ENCODE measurements at regions of chr1 and their contacts with region 1.

Region 1: DNA sequence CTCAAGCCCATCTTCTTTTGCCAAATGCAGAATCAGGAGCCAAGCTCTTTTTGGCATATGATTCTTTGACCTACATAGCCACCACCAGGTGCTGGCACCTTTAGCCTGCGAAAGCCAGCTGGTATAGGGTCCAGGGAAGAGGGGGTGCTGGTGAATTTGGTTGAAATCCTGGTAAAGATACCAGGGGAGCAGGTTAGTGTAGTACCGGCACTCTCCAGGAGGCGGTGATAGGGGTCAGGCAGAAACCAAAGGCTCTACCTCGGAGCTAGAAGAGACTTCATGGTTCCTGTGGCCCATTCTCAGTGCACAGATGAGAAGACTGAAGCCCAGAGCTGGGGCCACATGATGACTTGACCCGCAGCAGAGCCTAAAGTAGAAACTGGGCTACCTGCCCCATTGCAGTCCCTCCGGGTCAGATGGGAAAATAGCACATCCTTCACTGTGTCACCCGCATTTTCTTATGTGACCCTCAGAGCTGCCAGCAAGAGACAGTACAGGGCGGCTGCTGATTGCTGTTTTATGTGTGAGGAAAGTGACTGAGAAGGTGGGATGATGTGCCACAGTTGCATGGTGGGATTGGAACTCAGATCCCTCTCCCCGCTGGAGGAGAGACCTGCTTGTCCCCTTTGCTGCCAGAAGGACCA is 36.0 kb upstream of the IL19 start:
- DNase-seq: peak; percentile 43 to 78
- ATAC-seq: peak; percentile 60 to 84; a peak in 4 of 6 replicates
- H3K4me3 ChIP-seq: no peak overlapping the region
- H3K27ac ChIP-seq: no peak overlapping the region
- H3K4me1 ChIP-seq: peaks cover 6% of the 10 kb centered on the region; the same call in 1 of the 3 replicates
- CTCF ChIP-seq: peak; percentile 65
- EP300 ChIP-seq: no peak
- POLR2A ChIP-seq: no peak
- RAD21 ChIP-seq: peak; percentile 73 to 75

Region 2: GRCh38 chr1:206496131-206496793 is 238.4 kb before region 1 on chr1:
- CTCF ChIA-PET with region 1: no interaction called
- POLR2A ChIA-PET with region 1: no interaction called
- DNase-seq: no peak
- ATAC-seq: no peak
- H3K4me3 ChIP-seq: no peak overlapping the region
- H3K27ac ChIP-seq: no peak overlapping the region
- H3K4me1 ChIP-seq: peaks cover 11% of the 10 kb centered on the region; the same call in 2 of the 3 replicates
- CTCF ChIP-seq: no peak
- EP300 ChIP-seq: no peak
- POLR2A ChIP-seq: no peak
- RAD21 ChIP-seq: no peak

Region 3: DNA sequence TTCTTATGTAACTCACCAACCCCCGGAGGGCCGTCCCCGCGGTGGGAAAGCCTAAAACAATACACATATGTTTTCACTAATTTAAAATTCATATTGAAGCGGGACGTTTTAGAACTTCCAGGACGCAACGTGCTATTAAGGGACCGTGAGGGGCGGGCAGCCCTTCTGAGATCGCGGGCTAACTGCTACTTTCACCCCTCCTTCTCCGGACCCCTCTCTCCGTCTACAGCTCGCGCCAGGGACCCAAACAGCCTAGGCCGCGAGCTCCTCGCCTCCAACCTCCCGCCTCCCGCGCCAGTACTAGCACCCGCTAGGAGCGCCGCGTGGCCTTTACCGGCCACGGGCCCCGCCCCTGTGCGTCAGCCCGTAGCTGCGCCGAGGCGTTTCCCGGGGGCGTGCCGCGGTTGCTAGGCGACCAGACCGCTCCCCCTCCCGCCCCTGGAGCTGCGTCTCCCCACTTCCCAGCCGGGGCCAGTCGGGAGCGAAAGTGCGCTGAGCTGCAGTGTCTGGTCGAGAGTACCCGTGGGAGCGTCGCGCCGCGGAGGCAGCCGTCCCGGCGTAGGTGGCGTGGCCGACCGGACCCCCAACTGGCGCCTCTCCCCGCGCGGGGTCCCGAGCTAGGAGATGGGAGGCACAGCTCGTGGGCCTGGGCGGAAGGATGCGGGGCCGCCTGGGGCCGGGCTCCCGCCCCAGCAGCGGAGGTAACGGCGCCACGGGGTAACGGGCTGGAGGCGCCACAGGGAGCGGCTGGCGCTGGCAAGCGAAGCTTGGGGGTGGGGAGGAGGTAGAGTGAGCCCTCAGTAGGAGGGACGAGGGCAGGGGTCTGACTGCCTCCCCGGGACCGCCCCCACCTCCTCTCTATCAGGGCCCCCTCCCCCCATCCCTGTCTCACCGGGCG is 99.3 kb before region 1 on chr1 and contains the start of gene DYRK3:
- CTCF ChIA-PET with region 1: interaction called, 14 read pairs
- POLR2A ChIA-PET with region 1: no interaction called
- DNase-seq: peak; percentile 87 to 93
- ATAC-seq: peak; percentile 91 to 95
- H3K4me3 ChIP-seq: peak within 1 kb of the TSS; percentile 91
- H3K27ac ChIP-seq: peak within 1 kb of the TSS; percentile 88 to 89
- H3K4me1 ChIP-seq: peaks cover 32% of the 10 kb centered on the region; the same call in 2 of the 3 replicates
- CTCF ChIP-seq: no peak
- EP300 ChIP-seq: no peak
- POLR2A ChIP-seq: peak; percentile 91
- RAD21 ChIP-seq: no peak; a peak in 1 of 5 replicates
- polyA plus RNA-seq, gene DYRK3: 7.3 and 9.3 TPM in 2 replicates

Region 4: DNA sequence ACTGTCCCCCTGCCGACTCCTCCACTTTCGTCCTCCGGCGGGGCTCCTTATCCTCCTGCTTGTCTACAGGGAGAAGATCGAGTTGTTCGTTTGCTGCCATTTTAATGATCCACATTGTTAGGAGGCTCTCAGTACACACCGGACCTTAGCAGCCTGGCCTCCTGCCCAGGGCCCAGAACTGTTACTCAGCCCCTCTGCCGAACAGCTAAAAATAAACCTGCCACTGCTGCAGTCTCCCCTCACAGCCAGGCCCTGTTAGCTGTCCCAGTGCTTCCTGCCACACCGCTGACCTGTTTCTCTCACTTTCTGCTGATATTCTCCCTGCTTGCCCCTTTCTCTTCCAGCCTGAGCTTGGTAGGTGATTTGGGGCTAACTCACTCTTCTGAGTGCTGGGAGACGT is 41.6 kb before region 1 on chr1:
- CTCF ChIA-PET with region 1: interaction called, 11 read pairs
- POLR2A ChIA-PET with region 1: no interaction called
- DNase-seq: no peak
- ATAC-seq: peak in 1 of 2 experiments; percentile 28; a peak in 2 of 6 replicates
- H3K4me3 ChIP-seq: no peak overlapping the region
- H3K27ac ChIP-seq: peak overlapping the region in 1 of 2 experiments; percentile 42; a peak in 4 of 6 replicates
- H3K4me1 ChIP-seq: peaks cover 75% of the 10 kb centered on the region
- CTCF ChIP-seq: no peak
- EP300 ChIP-seq: no peak
- POLR2A ChIP-seq: no peak
- RAD21 ChIP-seq: no peak

Region 5: DNA sequence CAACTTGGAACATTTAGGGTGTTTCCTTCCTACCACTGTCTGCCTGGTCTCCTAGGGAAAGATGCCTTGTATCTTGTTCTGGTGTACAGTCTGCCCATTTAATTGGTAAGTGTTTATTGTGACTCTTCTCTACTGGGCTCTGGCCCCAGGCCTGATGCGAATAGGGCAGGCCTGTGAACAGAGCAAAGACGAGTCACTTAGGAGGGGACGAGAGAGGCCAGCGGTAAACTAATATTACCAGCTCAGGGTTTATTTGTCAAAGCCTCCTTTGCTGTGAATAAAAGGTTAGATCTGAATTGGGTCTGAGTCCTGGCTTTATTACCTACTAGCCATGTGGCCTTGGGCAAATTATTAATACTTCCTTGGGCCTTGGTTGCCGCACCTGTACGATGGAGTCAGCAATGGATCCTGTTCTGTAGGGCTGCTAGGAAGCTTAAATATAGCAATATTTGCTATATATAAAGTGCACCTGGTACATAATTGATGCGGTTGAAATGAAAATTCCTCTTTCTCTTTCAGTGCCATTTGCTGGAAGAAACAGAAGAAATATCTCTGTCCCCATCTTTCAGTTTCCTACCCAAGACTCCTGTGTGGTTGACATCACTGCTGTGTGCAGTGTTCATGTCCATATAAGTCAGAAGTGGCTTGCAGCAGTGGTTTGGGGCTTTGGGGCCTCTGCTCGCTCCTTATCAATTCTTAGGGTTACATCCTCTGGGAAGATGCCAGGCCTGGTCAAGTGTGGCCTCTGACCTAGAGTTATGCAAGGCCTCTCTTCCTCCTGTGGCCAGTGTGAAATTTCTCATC is 17.5 kb before region 1 on chr1:
- CTCF ChIA-PET with region 1: interaction called, 23 read pairs
- POLR2A ChIA-PET with region 1: no interaction called
- DNase-seq: no peak
- ATAC-seq: no peak
- H3K4me3 ChIP-seq: no peak overlapping the region
- H3K27ac ChIP-seq: peak overlapping the region; percentile 70 to 74
- H3K4me1 ChIP-seq: peaks cover 88% of the 10 kb centered on the region
- CTCF ChIP-seq: no peak
- EP300 ChIP-seq: no peak
- POLR2A ChIP-seq: no peak
- RAD21 ChIP-seq: no peak

Region 6: GRCh38 chr1:206744683-206745082 is 10.1 kb after region 1 on chr1:
- CTCF ChIA-PET with region 1: interaction called, 23 read pairs
- POLR2A ChIA-PET with region 1: no interaction called
- DNase-seq: no peak
- ATAC-seq: peak; percentile 22 to 45; a peak in 3 of 6 replicates
- H3K4me3 ChIP-seq: no peak overlapping the region
- H3K27ac ChIP-seq: no peak overlapping the region
- H3K4me1 ChIP-seq: no peaks in the 10 kb centered on the region
- CTCF ChIP-seq: no peak
- EP300 ChIP-seq: no peak
- POLR2A ChIP-seq: no peak
- RAD21 ChIP-seq: no peak

Region 7: DNA sequence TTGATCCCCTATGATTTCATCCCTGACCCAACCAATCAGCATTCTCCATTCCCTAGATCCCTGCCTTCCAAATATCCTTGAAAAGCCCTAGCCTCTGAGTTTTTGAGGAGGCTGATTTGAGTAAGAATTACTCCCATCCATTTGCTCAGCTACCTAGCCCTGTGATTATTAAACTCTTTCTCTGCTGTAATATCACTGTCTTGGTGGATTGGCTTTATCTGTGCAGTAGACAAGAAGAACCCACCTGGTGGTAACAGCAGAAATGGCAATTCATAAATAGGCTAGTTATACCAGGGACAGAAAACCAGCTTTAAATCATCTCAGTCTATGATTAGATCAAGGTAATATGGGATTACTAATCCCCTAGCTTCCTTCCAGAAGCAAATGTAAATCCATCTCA is 143.8 kb after region 1 on chr1:
- CTCF ChIA-PET with region 1: no interaction called
- POLR2A ChIA-PET with region 1: no interaction called
- DNase-seq: peak in 1 of 2 experiments; percentile 27
- ATAC-seq: no peak
- H3K4me3 ChIP-seq: no peak overlapping the region
- H3K27ac ChIP-seq: no peak overlapping the region
- H3K4me1 ChIP-seq: no peaks in the 10 kb centered on the region
- CTCF ChIP-seq: no peak
- EP300 ChIP-seq: no peak
- POLR2A ChIP-seq: no peak
- RAD21 ChIP-seq: no peak

Region 8: DNA sequence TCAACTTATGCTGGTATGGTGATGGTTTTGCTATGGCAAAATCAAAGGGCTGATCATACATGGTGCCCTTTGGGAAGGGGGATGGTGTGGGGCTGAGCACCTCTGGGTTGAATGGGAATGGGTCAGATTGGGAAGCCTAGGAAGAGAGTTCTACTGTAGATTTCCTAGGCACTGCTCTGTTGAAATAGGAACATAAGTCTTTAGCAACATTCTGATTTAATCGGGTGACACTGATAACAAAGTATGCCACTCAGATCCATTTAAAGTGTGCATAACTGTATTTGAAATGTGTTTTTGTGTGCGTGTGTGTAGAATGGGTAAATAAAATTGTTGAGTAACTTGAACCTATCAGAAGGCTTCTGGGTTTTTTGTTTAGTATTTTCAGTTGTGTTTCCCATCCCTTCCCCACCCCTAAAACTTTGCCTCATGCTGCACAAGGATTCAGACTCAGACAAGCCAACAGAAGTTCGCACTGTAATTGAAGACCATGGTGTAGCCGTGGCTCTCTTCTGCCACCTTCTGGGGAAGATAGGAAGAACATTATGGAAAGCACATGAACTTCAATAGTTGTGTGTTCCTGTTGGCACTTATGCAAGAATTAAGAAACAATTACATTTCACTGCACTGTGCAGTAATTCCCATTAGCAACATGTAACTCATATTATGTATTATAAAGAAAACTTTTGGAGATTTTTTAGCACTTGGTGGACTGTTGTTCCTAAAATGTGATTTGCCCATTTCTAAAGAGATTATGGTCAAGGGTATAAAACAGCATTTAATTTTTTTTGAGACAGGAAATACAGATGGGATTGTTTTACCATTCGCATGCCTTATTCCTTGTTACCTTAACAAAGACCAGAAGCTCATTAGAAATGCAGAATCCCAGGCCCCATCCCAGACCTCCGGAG is 343.1 kb after region 1 on chr1:
- CTCF ChIA-PET with region 1: interaction called, 12 read pairs
- POLR2A ChIA-PET with region 1: no interaction called
- DNase-seq: peak; percentile 62 to 78
- ATAC-seq: peak; percentile 67 to 93; a peak in 5 of 6 replicates
- H3K4me3 ChIP-seq: no peak overlapping the region
- H3K27ac ChIP-seq: peak overlapping the region; percentile 12 to 29; a peak in 1 of 6 replicates
- H3K4me1 ChIP-seq: peaks cover 28% of the 10 kb centered on the region
- CTCF ChIP-seq: peak; percentile 96
- EP300 ChIP-seq: no peak
- POLR2A ChIP-seq: no peak
- RAD21 ChIP-seq: peak; percentile 90 to 98